HEK293 (cell line): ENCODE measurements at regions of chr7 and their contacts with region 1.

Region 1: DNA sequence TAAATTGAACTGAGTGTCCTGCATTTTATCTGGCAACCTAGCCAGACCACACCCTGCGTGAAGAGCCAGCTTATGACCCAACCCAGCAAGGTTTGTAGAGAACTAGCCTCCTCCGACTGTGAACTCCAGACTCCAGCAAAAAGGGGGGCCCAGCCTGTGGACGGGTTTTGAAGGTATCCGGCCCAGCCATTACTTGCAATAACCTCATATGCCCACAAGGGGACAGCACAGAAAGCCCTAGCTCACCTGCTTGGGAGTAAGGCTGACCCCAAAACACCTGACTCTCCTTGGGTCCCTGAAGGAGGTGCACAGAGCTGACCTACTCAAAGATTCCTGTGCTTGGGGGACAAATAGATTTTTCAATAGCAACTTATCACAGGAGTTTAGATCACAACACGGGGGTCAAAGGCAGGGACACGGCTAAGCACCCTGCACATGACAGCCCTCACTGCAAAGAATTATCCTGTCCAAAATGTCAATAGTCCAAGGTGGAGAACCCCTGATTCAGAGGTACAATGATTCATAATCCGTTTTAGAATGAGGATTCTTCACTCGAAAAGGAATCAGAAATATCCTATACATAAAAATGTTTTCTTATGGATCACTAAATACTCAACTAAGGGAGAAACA is 4.6 kb downstream of the TRPV6 start:
- H3K4me3 ChIP-seq: no peak overlapping the region
- H3K27ac ChIP-seq: no peak overlapping the region
- H3K4me1 ChIP-seq: no peaks in the 10 kb centered on the region
- CTCF ChIP-seq: peak; percentile 10; the same call in 1 of the 2 replicates

Region 2: GRCh38 chr7:143008007-143008901 is 127.3 kb after region 1 on chr7:
- CTCF ChIA-PET with region 1: interaction called, 75 read pairs
- POLR2A ChIA-PET with region 1: no interaction called
- H3K4me3 ChIP-seq: no peak overlapping the region
- H3K27ac ChIP-seq: no peak overlapping the region
- H3K4me1 ChIP-seq: no peaks in the 10 kb centered on the region
- CTCF ChIP-seq: no peak